Activated naive CD8-positive, alpha-beta T cell treated with anti-CD3 and anti-CD28 coated beads, Interleukin-2, amount 10 ng/mL, durations not matched to agents 7 days and 5 days (primary cell): ENCODE measurements at regions of chr13 and their contacts with region 1.

Region 1: GRCh38 chr13:102800145-102801041 is 1.5 kb downstream of the BIVM start:
- DNase-seq: peak; percentile 93
- ATAC-seq: peak; percentile 78
- H3K4me3 Mint-ChIP-seq: peak overlapping the region; percentile 96
- H3K27ac Mint-ChIP-seq: peak overlapping the region; percentile 87
- H3K4me1 Mint-ChIP-seq: peaks cover 43% of the 10 kb centered on the region
- H3K27me3 Mint-ChIP-seq: no peaks in the 10 kb centered on the region

Region 2: GRCh38 chr13:102773441-102774215 is 26.8 kb before region 1 on chr13 and contains the start of gene TEX30:
- POLR2A ChIA-PET with region 1: interaction called, 77 read pairs
- DNase-seq: peak; percentile 96
- ATAC-seq: peak; percentile 94
- H3K4me3 Mint-ChIP-seq: peak within 1 kb of the TSS; percentile 81
- H3K27ac Mint-ChIP-seq: peak within 1 kb of the TSS; percentile 89
- H3K4me1 Mint-ChIP-seq: peaks cover 49% of the 10 kb centered on the region
- H3K27me3 Mint-ChIP-seq: no peaks in the 10 kb centered on the region
- total RNA-seq, gene TEX30: 22.2 to 23.0 TPM

Region 3: GRCh38 chr13:102845630-102846260 is 45.4 kb after region 1 on chr13 and contains the start of gene ERCC5:
- POLR2A ChIA-PET with region 1: interaction called, 27 read pairs
- DNase-seq: peak; percentile 96
- ATAC-seq: peak; percentile 82
- H3K4me3 Mint-ChIP-seq: peak within 1 kb of the TSS; percentile 96
- H3K27ac Mint-ChIP-seq: peak within 1 kb of the TSS; percentile 98
- H3K4me1 Mint-ChIP-seq: peaks cover 27% of the 10 kb centered on the region
- H3K27me3 Mint-ChIP-seq: no peaks in the 10 kb centered on the region
- total RNA-seq, gene ERCC5: 102 to 111 TPM